Common myeloid progenitor, CD34-positive (primary cell): ENCODE measurements at regions of chr22 and their contacts with region 1.

Region 1: DNA sequence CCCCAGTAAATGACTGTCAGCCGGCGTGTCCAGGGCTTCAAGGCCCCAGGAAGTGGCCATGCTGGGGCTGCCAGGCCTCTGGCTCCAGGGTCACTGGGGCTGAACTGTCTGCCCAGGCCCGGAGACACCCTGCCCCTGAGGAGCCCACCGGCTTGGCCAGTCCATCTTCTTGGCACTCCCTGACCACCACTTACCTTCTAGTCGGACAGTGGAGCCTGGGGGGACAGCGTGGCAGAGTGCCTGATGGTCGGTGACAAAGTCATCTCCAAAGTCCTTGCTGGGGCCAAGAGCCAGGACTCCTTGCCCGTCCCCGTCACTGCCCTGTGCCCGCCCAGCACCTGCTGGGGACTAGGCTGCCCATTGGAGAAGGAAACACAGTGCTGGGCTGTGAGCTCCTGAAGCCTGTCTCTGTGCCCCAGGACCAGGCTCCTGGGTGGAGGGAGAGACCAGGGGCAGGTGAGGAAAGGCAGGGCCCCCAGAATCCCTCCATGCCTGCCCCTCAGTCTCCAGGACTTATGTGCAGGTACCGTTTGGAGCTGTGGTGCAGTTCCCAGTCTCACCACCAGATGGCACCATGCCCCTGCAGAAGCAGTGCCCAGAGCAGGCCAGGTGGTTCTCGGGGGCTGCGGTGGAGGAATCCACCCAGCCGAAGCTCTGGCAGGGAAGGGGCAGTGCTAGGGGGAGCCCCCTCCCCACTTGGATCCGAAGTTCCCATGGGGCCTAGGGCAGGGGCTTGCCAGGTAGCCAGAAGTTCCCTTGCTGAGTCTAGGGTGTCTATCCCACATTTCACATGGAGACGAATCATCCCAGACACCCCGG is 6.0 kb upstream of the CCDC188 start:
- DNase-seq: peak; percentile 79 to 91 (median 85)
- H3K4me3 ChIP-seq: no peak overlapping the region
- H3K27ac ChIP-seq: peak overlapping the region in 1 of 2 experiments; percentile 5
- H3K4me1 ChIP-seq: peaks cover 0 to 75% (median 57%) of the 10 kb centered on the region in 4 experiments
- H3K27me3 ChIP-seq: no peaks in the 10 kb centered on the region

Region 2: GRCh38 chr22:20116951-20117645 is 39.7 kb before region 1 on chr22 and contains the start of gene TRMT2A:
- CTCF ChIA-PET with region 1: no interaction called
- POLR2A ChIA-PET with region 1: no interaction called
- DNase-seq: peak; percentile 99
- H3K4me3 ChIP-seq: peak within 1 kb of the TSS; percentile 61 to 98 (median 84)
- H3K27ac ChIP-seq: peak within 1 kb of the TSS; percentile 85 to 96
- H3K4me1 ChIP-seq: peaks cover 10 to 31% (median 27%) of the 10 kb centered on the region in 4 experiments
- H3K27me3 ChIP-seq: no peaks in the 10 kb centered on the region

Region 3: DNA sequence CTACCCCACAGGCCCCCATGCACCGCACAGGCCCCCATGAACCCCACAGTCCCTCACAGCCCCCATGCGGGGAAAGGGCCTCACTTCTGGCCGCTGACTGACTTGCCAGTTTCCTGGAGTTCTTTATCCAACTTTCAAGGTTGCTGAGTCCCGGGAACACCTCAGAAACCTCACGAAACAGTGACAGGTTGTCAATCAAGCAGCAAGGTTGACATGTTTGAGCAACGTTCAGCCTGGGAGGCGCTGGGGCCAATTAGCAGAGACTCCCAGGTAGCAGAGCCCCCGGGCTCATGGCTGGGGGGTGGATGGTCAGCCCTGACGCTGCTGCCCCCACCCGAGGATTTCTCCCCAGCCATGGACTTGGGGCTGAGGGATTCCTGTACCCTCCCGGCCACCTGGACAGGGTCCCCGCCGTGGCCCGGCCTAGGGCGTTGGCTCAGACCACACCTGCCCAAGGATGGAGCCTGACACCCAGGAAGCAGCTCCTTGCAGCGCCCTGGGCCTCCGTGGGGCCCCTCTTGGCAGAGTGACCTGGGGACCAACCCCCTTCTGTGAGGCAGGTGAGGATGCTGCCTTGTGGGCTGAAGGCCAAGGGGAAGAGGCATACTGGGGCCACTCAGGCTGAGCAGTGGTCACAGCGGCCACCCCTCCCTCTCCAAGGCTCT is 27.8 kb after region 1 on chr22:
- CTCF ChIA-PET with region 1: no interaction called
- POLR2A ChIA-PET with region 1: no interaction called
- DNase-seq: no peak
- H3K4me3 ChIP-seq: no peak overlapping the region
- H3K27ac ChIP-seq: no peak overlapping the region
- H3K4me1 ChIP-seq: no peaks in the 10 kb centered on the region
- H3K27me3 ChIP-seq: no peaks in the 10 kb centered on the region

Region 4: GRCh38 chr22:20238536-20238900 is 81.7 kb after region 1 on chr22:
- CTCF ChIA-PET with region 1: interaction called, 15 read pairs
- POLR2A ChIA-PET with region 1: interaction called, 6 read pairs
- DNase-seq: peak; percentile 54 to 71 (median 67)
- H3K4me3 ChIP-seq: no peak overlapping the region
- H3K27ac ChIP-seq: no peak overlapping the region
- H3K4me1 ChIP-seq: peaks cover 0 to 55% (median 48%) of the 10 kb centered on the region in 4 experiments
- H3K27me3 ChIP-seq: no peaks in the 10 kb centered on the region

Region 5: DNA sequence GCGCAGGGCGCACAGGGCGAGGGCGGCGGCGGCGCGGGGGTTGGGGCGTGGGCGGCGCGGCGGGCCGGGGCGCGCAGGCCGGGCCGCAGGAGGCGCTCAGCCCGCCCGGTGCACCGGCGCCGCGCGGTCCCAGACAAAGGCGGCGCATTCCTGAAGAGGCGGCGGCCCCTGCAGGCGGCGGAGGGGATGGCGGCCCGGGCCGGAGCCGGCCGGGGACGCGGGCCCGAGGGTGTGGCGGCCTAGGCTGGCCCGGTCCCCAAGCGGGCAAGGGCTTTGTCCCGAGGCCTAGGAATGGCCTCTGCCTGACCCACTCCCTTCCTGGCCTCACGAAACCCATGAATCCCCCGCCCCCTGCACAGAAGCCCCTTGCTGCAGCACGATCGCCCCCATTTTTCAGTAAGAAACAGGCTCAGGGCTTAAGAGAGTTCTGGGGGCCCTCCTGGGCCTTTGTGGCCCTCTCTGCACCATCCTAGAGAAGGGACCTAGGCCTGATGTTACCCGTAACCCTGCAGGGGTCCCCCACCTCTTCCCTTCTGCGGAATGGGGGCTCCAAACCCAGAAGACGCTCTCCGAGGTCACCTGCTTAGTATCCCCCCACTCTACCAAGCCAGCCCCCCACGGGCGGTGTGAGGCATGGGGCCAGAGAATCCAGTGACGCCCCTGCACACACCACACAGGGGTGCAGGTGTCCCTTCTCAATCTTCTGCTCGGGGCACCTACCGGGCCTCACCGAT is 111.6 kb after region 1 on chr22 and contains the start of gene RTN4R:
- CTCF ChIA-PET with region 1: interaction called, 11 read pairs
- POLR2A ChIA-PET with region 1: no interaction called
- DNase-seq: peak; percentile 34 to 67 (median 59)
- H3K4me3 ChIP-seq: peak within 1 kb of the TSS; percentile 32 to 72 (median 64)
- H3K27ac ChIP-seq: peak within 1 kb of the TSS in 1 of 2 experiments; percentile 58
- H3K4me1 ChIP-seq: peaks cover 0 to 19% (median 17%) of the 10 kb centered on the region in 4 experiments
- H3K27me3 ChIP-seq: peaks cover 0 to 2% (median 0%) of the 10 kb centered on the region in 5 experiments

Region 6: DNA sequence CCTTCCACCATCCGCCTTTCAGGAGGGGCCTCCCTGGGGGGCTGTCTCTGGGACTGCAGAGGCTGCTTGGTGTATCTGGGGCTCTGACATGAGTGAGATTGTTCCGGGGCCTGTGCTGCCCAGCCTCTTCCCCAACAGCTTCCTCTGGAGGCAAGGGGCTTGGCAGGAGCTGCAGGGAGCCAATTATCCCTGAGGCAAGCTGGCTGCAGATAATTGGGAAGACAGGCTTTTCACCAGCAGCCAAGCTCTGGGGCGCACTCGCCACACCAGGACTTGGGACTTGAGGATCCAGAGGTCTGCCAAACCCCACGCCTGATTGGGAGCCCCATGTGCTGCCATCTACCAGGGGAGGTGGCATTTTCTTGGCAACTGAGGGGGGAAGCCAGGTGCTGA is 126.8 kb after region 1 on chr22:
- CTCF ChIA-PET with region 1: interaction called, 18 read pairs
- POLR2A ChIA-PET with region 1: no interaction called
- DNase-seq: no peak
- H3K4me3 ChIP-seq: no peak overlapping the region
- H3K27ac ChIP-seq: no peak overlapping the region
- H3K4me1 ChIP-seq: no peaks in the 10 kb centered on the region
- H3K27me3 ChIP-seq: no peaks in the 10 kb centered on the region